ENCODE measurements at regions of chr1 and their contacts with region 1.

Region 1: DNA sequence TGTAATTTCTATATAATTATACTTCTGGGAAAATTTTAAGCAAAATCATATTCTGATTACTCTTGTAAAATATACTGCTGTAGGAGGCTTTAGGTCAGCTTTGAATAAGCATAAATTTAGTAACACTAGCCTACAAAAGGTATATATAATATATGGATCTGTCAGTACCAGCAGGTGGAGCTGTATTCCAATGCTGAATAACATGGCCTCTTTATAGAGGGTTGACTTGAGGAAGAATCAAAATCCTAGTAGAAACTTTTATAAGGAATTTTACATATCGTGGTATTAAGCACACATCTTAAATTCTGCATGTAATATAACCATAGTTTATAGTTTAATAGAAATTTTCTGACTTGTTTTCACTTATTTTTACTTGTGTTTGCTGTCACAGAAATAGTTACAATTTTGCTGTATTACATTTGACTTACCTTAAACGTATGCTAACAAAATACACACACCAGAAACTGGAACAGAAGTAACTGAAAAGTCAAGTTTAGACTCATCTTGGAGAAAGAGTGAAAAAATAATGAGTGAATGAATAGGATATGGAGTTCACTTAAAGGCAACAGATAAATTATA is 79.3 kb downstream of the HMCN1 start:
- DNase-seq: no peak
- H3K4me3 ChIP-seq: no peak overlapping the region
- CTCF ChIP-seq: peak; percentile 18

Region 2: GRCh38 chr1:185786524-185786923 is 27.0 kb before region 1 on chr1:
- CTCF ChIA-PET with region 1: interaction called, 12 read pairs
- POLR2A ChIA-PET with region 1: no interaction called
- DNase-seq: peak; percentile 79
- H3K4me3 ChIP-seq: no peak overlapping the region
- CTCF ChIP-seq: no peak

Region 3: DNA sequence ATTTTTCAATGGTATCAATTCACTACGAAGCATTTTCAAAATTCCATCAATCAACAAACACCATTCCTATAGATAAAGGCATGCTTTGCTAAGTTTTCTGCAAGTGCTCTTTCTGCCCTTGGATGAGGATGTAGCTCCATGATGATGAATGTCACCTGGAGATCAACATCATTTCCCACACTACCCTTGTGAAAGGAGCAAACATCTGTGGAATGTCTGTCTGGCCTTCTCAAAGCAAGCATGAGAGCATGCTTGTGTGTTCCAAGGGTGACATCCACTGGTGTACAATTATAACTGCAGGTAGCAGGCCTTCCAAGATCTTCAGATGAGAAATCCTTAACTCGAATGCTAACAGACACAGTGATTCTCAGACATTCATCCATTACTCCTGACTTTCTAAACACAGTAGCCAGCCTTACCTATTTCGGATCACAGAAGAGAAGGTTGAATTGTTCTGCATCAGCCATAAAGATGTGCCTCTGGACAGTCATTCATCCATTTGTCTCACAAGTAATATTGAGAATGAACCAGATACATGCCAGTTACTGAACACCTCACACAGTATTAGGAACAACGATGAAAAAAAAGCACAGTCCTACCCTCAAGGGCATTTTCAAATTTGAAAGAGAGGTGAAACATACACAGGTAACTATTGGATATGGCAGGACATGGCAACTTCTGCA is 399.2 kb after region 1 on chr1:
- CTCF ChIA-PET with region 1: interaction called, 14 read pairs
- POLR2A ChIA-PET with region 1: no interaction called
- DNase-seq: peak; percentile 92
- H3K4me3 ChIP-seq: no peak overlapping the region
- CTCF ChIP-seq: peak; percentile 77

Measured in AG04449 (cell line).